Mammary epithelial cell (primary cell): ENCODE measurements at regions of chr6 and their contacts with region 1.

Region 1: DNA sequence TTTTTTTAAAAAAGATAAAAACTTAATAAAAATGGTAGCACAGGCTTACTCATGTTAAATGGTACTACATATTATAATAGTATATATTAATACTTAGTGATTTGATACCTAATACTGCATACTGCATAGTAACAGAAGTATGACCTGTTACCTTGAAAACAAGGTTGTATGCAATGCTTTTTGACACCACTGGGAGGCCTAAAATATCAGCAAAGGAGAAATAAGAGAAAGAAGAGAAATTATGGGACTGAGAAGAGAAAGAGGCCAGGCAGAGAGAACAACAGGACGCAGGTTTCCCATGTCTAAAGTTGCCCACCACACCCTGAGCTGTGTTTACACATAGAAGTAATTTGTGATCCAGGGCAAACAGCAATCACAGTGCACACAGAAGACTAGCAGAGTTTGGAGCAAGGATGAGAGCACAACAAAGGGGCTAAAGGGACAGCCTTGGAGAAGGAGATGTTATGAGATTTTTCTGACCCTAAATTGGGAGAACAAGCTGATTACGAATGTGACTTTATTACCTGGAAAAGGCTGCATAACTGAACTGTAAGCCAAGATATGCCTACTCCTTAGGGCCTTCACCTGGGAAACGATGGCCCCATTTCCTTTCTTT is 73.2 kb downstream of the ROS1 start:
- DNase-seq: peak; percentile 14
- H3K4me3 ChIP-seq: no peak overlapping the region
- H3K27ac ChIP-seq: no peak overlapping the region
- H3K4me1 ChIP-seq: peaks cover 4% of the 10 kb centered on the region
- H3K27me3 ChIP-seq: no peaks in the 10 kb centered on the region
- CTCF ChIP-seq: peak; percentile 74 to 79

Region 2: GRCh38 chr6:117371492-117371891 is 18.9 kb after region 1 on chr6:
- CTCF ChIA-PET with region 1: interaction called, 11 read pairs
- dilution Hi-C with region 1: no loop called
- in situ Hi-C with region 1: no loop called
- intact Hi-C with region 1: no loop called
- DNase-seq: no peak
- H3K4me3 ChIP-seq: no peak overlapping the region
- H3K27ac ChIP-seq: no peak overlapping the region
- H3K4me1 ChIP-seq: peaks cover 3% of the 10 kb centered on the region
- H3K27me3 ChIP-seq: no peaks in the 10 kb centered on the region
- CTCF ChIP-seq: no peak

Region 3: DNA sequence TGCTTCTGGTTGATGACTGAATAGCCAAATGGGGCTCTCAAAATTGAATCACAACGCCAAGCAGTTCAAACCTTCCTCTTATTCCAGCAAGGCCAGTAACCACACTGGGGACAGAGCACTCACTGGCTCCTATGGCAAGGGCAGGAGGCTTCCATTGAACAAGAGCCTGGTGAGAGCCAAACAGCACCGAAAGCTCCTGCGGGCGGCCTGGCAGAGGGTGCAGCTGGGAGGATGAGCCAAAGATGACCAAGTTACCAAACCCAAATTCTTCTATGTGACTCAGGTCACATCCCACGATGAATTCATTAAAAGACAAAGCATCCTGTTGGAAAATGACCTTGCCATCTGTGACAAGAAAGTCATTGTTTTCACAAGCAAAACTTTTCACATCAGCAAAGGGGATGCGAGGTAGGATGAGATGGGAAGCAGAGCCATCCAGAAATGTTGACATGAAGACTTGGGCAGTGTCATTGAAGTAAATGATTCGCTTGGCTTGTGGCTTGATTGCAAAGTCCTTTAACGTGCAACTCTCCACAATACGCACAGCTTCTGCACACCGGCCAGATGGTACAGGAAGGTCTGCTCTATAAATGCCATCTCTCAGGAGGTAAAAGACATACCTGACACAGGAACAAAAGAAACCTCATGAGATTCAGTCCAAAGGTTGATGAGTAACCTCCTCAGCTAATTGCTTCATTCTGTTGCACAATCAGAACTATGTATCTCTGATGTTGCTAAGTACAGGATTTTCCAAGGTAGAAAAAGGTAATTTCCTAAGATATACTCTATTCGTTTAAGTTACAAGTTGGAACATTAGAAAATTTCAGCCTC is 36.9 kb after region 1 on chr6:
- CTCF ChIA-PET with region 1: no interaction called
- dilution Hi-C with region 1: no loop called
- in situ Hi-C with region 1: no loop called
- intact Hi-C with region 1: loop called (anchors 5 kb)
- DNase-seq: peak; percentile 96
- H3K4me3 ChIP-seq: peak overlapping the region in 2 of 3 experiments; percentile 1 to 23
- H3K27ac ChIP-seq: peak overlapping the region; percentile 89
- H3K4me1 ChIP-seq: peaks cover 39% of the 10 kb centered on the region
- H3K27me3 ChIP-seq: no peaks in the 10 kb centered on the region
- CTCF ChIP-seq: no peak

Region 4: GRCh38 chr6:117531346-117531745 is 178.8 kb after region 1 on chr6:
- CTCF ChIA-PET with region 1: no interaction called
- dilution Hi-C with region 1: no loop called
- in situ Hi-C with region 1: no loop called
- intact Hi-C with region 1: no loop called
- DNase-seq: no peak
- H3K4me3 ChIP-seq: no peak overlapping the region
- H3K27ac ChIP-seq: no peak overlapping the region
- H3K4me1 ChIP-seq: peaks cover 3% of the 10 kb centered on the region
- H3K27me3 ChIP-seq: no peaks in the 10 kb centered on the region
- CTCF ChIP-seq: no peak

Region 5: GRCh38 chr6:117674991-117675657 is 322.6 kb after region 1 on chr6 and contains the start of gene NUS1:
- CTCF ChIA-PET with region 1: no interaction called
- dilution Hi-C with region 1: no loop called
- in situ Hi-C with region 1: no loop called
- intact Hi-C with region 1: loop called (anchors 10 kb)
- DNase-seq: peak; percentile 96
- H3K4me3 ChIP-seq: peak within 1 kb of the TSS; percentile 75 to 82 (median 80)
- H3K27ac ChIP-seq: peak within 1 kb of the TSS; percentile 50
- H3K4me1 ChIP-seq: peaks cover 21% of the 10 kb centered on the region
- H3K27me3 ChIP-seq: no peaks in the 10 kb centered on the region
- CTCF ChIP-seq: peak; percentile 64 to 86
- total RNA-seq, gene NUS1: 17.7 to 38.7 TPM